ENCODE measurements at regions of chr18 and their contacts with region 1.

Region 1: DNA sequence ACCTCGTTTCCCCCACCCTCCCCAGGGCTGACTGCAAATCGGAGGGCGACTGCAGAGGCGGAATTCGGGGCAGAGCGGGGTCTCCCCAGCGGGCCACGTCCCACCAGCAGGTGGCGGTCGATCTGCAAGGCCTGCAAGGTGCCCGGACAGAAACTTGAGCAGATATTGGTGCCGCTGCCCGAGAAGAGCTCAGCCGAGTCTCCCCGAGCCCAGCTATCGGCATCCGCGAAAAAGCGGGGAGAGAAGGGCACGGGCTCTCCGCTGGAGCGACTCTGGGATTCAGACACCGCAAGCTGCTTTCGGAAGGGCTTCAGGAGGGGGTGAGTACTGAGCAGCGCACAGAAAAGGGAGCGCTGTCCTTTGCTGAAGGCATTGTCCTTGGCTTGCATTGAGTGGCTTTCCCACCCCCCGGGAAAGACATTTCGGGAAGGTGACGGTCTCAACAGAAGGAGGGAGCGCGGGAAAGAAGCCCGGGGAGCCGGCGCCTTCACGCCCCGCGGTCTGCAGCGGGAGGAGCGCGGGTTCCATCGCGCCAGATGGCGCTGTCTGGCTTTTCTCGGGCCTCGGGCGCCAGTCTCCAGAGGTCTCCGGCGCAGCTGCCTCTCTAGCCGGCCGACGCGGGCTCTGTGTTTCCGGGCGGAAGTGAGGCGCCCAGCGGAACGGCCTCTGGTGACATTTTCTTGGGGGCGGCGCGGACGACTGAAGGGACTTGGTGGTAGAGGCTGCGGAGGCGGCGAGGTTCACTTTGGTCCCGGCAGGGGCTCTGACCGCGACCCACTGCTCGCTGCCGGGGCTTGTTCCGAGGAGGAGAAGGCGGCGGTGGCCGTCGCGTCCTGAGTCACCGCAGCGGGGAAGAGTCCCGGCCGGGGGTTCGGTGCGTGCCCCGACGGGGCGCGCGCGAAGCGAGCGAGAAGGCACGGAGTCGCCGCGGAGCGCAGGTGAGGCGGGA is 69.5 kb downstream of the HAUS1 start:
- DNase-seq: peak; percentile 89
- ATAC-seq: peak; percentile 92
- H3K4me3 ChIP-seq: peak overlapping the region; percentile 95
- H3K27ac ChIP-seq: peak overlapping the region; percentile 85
- H3K4me1 ChIP-seq: peaks cover 4% of the 10 kb centered on the region; the same call in 1 of the 2 replicates
- H3K27me3 ChIP-seq: no peaks in the 10 kb centered on the region
- CTCF ChIP-seq: peak; percentile 91
- POLR2A ChIP-seq: peak; percentile 83
- RAD21 ChIP-seq: peak; percentile 82

Region 2: DNA sequence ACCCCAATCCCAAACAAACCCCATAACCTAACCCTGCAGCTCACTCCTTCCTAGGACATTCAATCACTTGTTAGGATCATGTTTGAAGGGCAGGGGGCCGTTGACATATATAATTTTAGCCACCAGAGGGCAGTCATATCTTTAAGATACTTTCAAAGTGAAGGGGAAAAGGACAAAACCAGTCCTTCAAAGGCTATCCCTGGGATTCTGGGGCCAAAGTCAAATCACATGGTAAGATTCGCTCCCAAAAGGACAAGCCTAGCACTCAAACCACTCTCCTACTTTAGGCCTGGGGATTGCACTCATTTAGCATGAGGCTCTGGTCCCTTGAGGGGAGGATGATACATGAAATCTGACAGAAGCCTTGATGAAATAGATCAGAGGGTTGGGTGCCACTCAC is 24.9 kb before region 1 on chr18:
- CTCF ChIA-PET with region 1: interaction called, 10 read pairs
- POLR2A ChIA-PET with region 1: no interaction called
- dilution Hi-C with region 1: no loop called
- in situ Hi-C with region 1: no loop called
- intact Hi-C with region 1: loop called (anchors 1 kb)
- DNase-seq: peak; percentile 59
- ATAC-seq: peak; percentile 64
- H3K4me3 ChIP-seq: no peak overlapping the region
- H3K27ac ChIP-seq: no peak overlapping the region
- H3K4me1 ChIP-seq: peaks cover 13% of the 10 kb centered on the region
- H3K27me3 ChIP-seq: no peaks in the 10 kb centered on the region
- CTCF ChIP-seq: peak; percentile 76
- POLR2A ChIP-seq: no peak
- RAD21 ChIP-seq: peak; percentile 75

Region 3: DNA sequence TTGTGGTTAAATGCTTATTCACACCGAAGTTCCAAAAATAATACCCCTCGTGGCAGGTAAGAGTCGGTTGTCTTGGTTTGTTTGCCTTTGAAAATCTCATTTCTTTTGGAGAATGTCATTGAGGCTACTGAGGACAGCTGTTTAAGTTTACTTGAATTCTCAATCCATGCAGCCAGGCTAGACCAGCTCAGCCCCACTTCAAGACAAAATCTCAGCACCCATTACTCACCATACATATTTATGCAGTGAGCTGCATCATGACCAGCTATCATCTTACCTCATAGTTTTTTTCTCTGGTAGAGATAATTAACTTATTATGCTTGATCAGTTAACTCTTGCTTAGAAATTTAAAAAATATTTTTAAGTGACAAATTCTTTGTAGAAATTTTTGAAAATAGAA is 46.4 kb after region 1 on chr18:
- CTCF ChIA-PET with region 1: interaction called, 18 read pairs
- POLR2A ChIA-PET with region 1: interaction called, 4 read pairs
- dilution Hi-C with region 1: no loop called
- in situ Hi-C with region 1: no loop called
- intact Hi-C with region 1: no loop called
- DNase-seq: peak; percentile 92
- ATAC-seq: peak; percentile 99
- H3K4me3 ChIP-seq: no peak overlapping the region
- H3K27ac ChIP-seq: no peak overlapping the region
- H3K4me1 ChIP-seq: peaks cover 6% of the 10 kb centered on the region
- H3K27me3 ChIP-seq: no peaks in the 10 kb centered on the region
- CTCF ChIP-seq: no peak
- POLR2A ChIP-seq: no peak
- RAD21 ChIP-seq: no peak

Region 4: GRCh38 chr18:46260016-46260878 is 86.6 kb after region 1 on chr18:
- CTCF ChIA-PET with region 1: interaction called, 11 read pairs
- POLR2A ChIA-PET with region 1: no interaction called
- dilution Hi-C with region 1: no loop called
- in situ Hi-C with region 1: no loop called
- intact Hi-C with region 1: loop called (anchors 2 kb)
- DNase-seq: peak; percentile 85
- ATAC-seq: peak; percentile 72
- H3K4me3 ChIP-seq: no peak overlapping the region; the same call in 1 of the 2 replicates
- H3K27ac ChIP-seq: peak overlapping the region; percentile 90
- H3K4me1 ChIP-seq: peaks cover 17% of the 10 kb centered on the region
- H3K27me3 ChIP-seq: no peaks in the 10 kb centered on the region
- CTCF ChIP-seq: no peak
- POLR2A ChIP-seq: no peak
- RAD21 ChIP-seq: no peak

Region 5: DNA sequence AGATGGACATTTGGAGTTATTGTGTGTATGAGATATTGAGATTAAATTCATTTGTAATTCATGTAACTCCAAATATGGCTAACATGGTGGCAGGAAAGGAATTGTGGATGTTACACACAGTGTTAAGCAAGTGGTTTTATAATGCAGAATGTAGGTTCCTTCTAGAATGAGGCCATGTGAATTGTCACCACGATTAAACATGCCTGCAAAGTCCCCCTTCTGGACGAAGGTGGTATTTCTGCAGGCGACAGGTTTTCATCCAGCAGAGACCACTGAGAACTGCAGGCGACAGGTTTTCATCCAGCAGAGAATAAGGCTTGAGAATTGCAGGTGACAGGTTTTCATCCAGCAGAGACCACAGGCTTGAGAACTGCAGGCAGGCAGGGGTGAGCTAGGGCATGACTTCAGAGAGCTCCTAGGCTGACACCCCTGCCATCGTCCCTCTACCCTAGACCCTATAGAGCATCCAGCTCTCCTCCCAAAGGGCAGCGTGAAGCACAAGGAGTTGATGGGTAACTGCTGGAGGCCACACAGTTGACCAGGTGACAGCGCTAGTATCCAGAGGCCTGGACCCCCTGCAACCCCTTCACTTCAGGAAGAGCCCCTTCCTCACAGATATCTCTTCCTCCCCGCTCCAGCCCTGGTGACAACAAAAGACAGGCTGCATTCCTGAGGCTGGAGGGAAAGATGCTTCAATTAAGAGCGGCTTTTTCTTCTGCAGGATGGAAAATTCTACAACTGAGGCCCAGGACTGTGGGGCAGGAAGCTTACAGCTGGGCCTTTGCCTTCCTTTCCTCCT is 307.6 kb after region 1 on chr18:
- CTCF ChIA-PET with region 1: interaction called, 5 read pairs
- POLR2A ChIA-PET with region 1: no interaction called
- dilution Hi-C with region 1: no loop called
- in situ Hi-C with region 1: no loop called
- intact Hi-C with region 1: loop called (anchors 1 kb)
- DNase-seq: peak; percentile 52
- ATAC-seq: peak; percentile 75
- H3K4me3 ChIP-seq: no peak overlapping the region
- H3K27ac ChIP-seq: no peak overlapping the region
- H3K4me1 ChIP-seq: no peaks in the 10 kb centered on the region
- H3K27me3 ChIP-seq: no peaks in the 10 kb centered on the region; the same call in 1 of the 2 replicates
- CTCF ChIP-seq: peak; percentile 65
- POLR2A ChIP-seq: no peak
- RAD21 ChIP-seq: peak; percentile 69